IMR-90 (cell line): ENCODE measurements at regions of chr14 and their contacts with region 1.

Region 1: GRCh38 chr14:86892152-86892956 is 1100.6 kb downstream of the GALC start:
- DNase-seq: peak; percentile 15
- ATAC-seq: peak; percentile 65
- H3K4me3 ChIP-seq: no peak overlapping the region
- H3K27ac ChIP-seq: peak overlapping the region; percentile 57; the same call in 1 of the 2 replicates
- H3K4me1 ChIP-seq: peaks cover 5% of the 10 kb centered on the region
- H3K27me3 ChIP-seq: no peaks in the 10 kb centered on the region
- CTCF ChIP-seq: no peak
- POLR2A ChIP-seq: no peak
- RAD21 ChIP-seq: no peak

Region 2: DNA sequence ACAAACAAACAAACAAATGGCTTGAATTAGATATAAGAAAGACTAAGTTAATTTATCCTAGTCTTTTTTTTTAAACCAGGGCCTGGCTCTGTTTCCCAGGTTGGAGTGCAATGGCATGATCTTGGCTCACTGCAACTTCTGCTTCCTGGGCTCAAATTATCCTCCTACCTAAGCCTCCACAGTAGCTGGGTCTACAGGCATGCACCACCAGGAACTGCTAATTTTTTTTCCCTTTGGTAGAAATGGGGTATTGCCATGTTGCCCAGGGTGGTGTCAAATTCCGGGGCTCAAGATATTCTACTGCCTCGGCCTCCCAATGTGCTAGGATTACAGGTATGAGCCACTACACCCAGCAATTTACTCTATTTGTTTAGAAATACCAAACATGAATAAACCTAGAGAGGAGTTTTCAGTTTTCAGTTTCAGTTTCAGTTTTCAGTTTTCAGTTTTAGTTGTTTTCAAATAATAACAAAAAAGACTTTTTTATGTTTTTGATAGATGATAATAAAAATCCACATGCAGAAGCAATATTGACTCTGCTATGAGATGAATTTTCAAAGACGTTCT is 545.5 kb before region 1 on chr14:
- CTCF ChIA-PET with region 1: no interaction called
- POLR2A ChIA-PET with region 1: no interaction called
- dilution Hi-C with region 1: no loop called
- in situ Hi-C with region 1: no loop called
- intact Hi-C with region 1: loop called (anchors 5 kb)
- DNase-seq: no peak
- ATAC-seq: peak; percentile 51
- H3K4me3 ChIP-seq: peak overlapping the region; percentile 9; the same call in 1 of the 2 replicates
- H3K27ac ChIP-seq: no peak overlapping the region
- H3K4me1 ChIP-seq: no peaks in the 10 kb centered on the region
- H3K27me3 ChIP-seq: no peaks in the 10 kb centered on the region
- CTCF ChIP-seq: no peak
- POLR2A ChIP-seq: no peak
- RAD21 ChIP-seq: no peak

Region 3: GRCh38 chr14:86646688-86647346 is 245.5 kb before region 1 on chr14:
- CTCF ChIA-PET with region 1: no interaction called
- POLR2A ChIA-PET with region 1: no interaction called
- dilution Hi-C with region 1: no loop called
- in situ Hi-C with region 1: no loop called
- intact Hi-C with region 1: no loop called
- DNase-seq: peak; percentile 35
- ATAC-seq: peak; percentile 59
- H3K4me3 ChIP-seq: no peak overlapping the region
- H3K27ac ChIP-seq: 0 out of 2 replicates have a peak overlapping the region, but pooled peaks have one; percentile 1
- H3K4me1 ChIP-seq: no peaks in the 10 kb centered on the region; the same call in 1 of the 2 replicates
- H3K27me3 ChIP-seq: no peaks in the 10 kb centered on the region
- CTCF ChIP-seq: no peak
- POLR2A ChIP-seq: no peak
- RAD21 ChIP-seq: no peak

Region 4: GRCh38 chr14:86787717-86788116 is 104.6 kb before region 1 on chr14:
- CTCF ChIA-PET with region 1: no interaction called
- POLR2A ChIA-PET with region 1: no interaction called
- dilution Hi-C with region 1: no loop called
- in situ Hi-C with region 1: no loop called
- intact Hi-C with region 1: no loop called
- DNase-seq: peak; percentile 65
- ATAC-seq: peak; percentile 80
- H3K4me3 ChIP-seq: no peak overlapping the region
- H3K27ac ChIP-seq: peak overlapping the region; percentile 71
- H3K4me1 ChIP-seq: peaks cover 3% of the 10 kb centered on the region
- H3K27me3 ChIP-seq: no peaks in the 10 kb centered on the region
- CTCF ChIP-seq: no peak
- POLR2A ChIP-seq: no peak
- RAD21 ChIP-seq: no peak

Region 5: GRCh38 chr14:87002776-87003175 is 110.4 kb after region 1 on chr14:
- CTCF ChIA-PET with region 1: no interaction called
- POLR2A ChIA-PET with region 1: no interaction called
- dilution Hi-C with region 1: no loop called
- in situ Hi-C with region 1: no loop called
- intact Hi-C with region 1: no loop called
- DNase-seq: peak; percentile 5
- ATAC-seq: no peak; the same call in 1 of the 2 replicates
- H3K4me3 ChIP-seq: no peak overlapping the region
- H3K27ac ChIP-seq: no peak overlapping the region
- H3K4me1 ChIP-seq: no peaks in the 10 kb centered on the region
- H3K27me3 ChIP-seq: no peaks in the 10 kb centered on the region
- CTCF ChIP-seq: peak; percentile 33
- POLR2A ChIP-seq: no peak
- RAD21 ChIP-seq: peak; percentile 18; the same call in 1 of the 2 replicates

Region 6: DNA sequence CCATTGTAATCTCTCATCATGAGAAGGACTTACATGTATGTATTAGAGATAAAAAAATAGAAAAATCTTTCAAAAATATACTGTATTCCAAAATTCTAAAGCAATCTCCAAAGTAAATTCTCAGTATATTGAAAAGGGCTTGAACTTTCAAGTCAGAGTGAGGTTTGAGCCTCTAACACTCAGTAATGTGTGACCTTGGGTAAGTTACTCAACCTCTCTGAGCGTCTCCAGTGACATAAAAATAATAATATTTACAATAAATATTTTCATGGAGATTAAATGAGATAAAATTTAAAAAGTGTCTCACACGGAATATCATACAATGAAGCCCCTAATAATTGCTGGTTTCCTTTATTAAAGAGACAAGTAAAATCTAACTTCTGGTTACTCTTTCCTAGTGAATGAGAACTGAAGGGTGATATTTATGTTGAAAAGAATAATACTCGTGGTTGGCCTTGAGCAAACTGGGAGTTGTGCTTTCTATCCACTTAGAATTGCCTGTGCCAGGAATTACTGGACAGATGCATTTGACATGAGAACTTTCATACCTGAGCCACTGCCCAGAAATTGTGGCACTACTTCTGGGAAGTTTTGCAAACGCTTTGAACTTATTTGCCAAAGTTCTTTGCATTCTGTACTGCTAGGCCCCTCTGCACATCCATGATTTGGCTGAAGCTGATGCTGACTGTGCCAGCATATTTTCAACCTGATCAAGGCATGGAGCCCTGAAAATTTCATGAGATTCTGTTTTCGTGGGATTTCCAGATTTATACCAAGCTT is 166.9 kb after region 1 on chr14:
- CTCF ChIA-PET with region 1: no interaction called
- POLR2A ChIA-PET with region 1: no interaction called
- dilution Hi-C with region 1: no loop called
- in situ Hi-C with region 1: no loop called
- intact Hi-C with region 1: no loop called
- DNase-seq: no peak
- ATAC-seq: no peak
- H3K4me3 ChIP-seq: no peak overlapping the region
- H3K27ac ChIP-seq: no peak overlapping the region
- H3K4me1 ChIP-seq: no peaks in the 10 kb centered on the region
- H3K27me3 ChIP-seq: no peaks in the 10 kb centered on the region
- CTCF ChIP-seq: no peak
- POLR2A ChIP-seq: no peak
- RAD21 ChIP-seq: no peak